ENCODE measurements at regions of chr6 and their contacts with region 1.

Region 1: DNA sequence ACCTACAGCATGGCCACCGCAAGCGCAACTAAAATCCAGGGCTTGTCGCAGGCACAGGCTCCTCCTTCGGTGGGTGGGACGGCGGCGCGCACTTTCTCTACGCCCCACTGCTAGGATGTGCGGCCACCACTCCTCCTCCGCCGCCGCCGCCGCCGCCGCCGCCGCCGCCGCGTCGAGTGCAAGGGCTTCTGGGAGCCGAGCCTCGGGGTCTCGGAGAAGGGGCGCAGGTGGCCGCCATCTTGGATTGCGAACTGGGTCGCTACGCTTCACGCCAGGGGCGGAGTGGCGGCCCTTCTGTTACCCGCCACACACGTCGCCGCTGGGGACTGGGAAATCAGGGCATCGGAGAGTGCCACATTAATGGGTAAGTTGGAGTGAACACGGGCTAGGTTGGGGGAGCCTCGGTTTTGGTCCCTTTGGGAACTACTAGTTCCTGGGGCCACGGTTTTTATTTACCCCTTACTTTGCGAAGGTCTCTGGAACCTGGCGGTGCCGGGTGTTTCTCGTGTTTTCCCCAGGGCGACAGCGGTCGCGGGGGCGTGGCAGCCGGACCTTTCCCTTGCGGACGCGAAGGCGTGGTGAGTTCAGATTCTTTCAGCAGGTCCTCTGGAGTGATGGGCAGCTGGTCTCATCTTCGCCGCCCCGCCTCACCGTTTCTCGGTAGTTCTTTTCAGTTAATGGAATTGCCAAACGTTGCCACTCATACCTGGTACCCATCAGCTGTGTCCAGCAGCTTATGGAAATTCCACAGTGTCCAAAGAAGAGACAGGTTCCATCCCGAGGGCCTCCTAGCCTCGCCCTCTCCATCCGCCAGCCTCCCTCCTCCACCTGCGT is at the start of gene KPNA5:
- DNase-seq: peak; percentile 95
- ATAC-seq: peak; percentile 93
- H3K4me3 ChIP-seq: peak within 1 kb of the TSS; percentile 69 to 89 (median 84)
- H3K4me3 Mint-ChIP-seq: peak within 1 kb of the TSS; percentile 99
- H3K27ac ChIP-seq: peak within 1 kb of the TSS; percentile 83 to 88
- H3K27ac Mint-ChIP-seq: peak within 1 kb of the TSS; percentile 99
- H3K4me1 ChIP-seq: peaks cover 9 to 20% of the 10 kb centered on the region in 2 donors
- H3K4me1 Mint-ChIP-seq: peaks cover 45% of the 10 kb centered on the region
- H3K27me3 ChIP-seq: no peaks in the 10 kb centered on the region
- H3K27me3 Mint-ChIP-seq: no peaks in the 10 kb centered on the region
- CTCF ChIP-seq: no peak
- total RNA-seq, gene KPNA5: 41.7 and 42.9 TPM in 2 replicates

Region 2: GRCh38 chr6:116010790-116011401 is 670.3 kb before region 1 on chr6:
- CTCF ChIA-PET with region 1: no interaction called
- POLR2A ChIA-PET with region 1: no interaction called
- intact Hi-C with region 1: no loop called
- DNase-seq: peak; percentile 69
- ATAC-seq: peak; percentile 57
- H3K4me3 ChIP-seq: no peak overlapping the region
- H3K4me3 Mint-ChIP-seq: no peak overlapping the region
- H3K27ac ChIP-seq: no peak overlapping the region
- H3K27ac Mint-ChIP-seq: no peak overlapping the region
- H3K4me1 ChIP-seq: peaks cover 3 to 10% of the 10 kb centered on the region in 2 donors
- H3K4me1 Mint-ChIP-seq: peaks cover 21% of the 10 kb centered on the region
- H3K27me3 ChIP-seq: no peaks in the 10 kb centered on the region
- H3K27me3 Mint-ChIP-seq: peaks cover 3% of the 10 kb centered on the region
- CTCF ChIP-seq: peak; percentile 88

Region 3: DNA sequence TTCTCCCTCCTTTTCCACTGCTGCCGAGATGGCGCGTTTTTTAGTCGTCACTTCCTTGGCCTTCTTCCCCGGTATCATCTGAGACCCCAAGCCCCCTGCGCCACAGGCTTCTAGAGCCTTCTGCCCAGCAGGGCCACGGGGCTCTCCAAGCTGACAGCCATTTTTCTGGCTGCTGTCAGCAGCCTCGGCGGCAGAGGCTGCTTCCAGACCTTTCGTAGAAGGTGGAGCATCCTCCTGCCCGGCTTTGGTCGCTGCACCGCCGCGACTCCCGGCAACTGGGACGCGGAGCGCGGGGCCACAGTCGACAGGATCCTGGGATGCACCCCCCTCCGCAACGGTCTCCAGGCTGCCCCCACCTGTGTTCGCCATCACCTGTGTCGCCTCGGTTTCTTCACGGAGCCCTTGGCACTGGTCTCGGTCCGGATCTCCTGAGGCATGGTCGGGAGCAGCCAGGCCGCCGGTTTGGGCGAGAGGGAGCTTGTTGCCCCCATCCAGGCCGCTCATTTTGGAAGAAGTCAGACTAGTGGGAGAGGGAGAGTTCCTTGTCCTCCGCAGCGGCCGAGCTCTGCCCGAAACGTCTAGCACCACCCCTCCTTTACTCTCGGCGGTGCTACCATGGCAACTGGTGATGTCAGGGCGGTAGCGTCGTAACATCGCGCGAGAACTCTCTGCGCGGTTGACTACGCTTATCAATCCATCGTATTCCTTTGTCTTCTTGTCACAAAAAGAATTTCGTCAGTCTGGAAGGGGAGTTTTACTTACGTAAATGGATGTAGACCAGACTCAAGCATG is 427.5 kb before region 1 on chr6 and contains the start of gene TSPYL4:
- CTCF ChIA-PET with region 1: no interaction called
- POLR2A ChIA-PET with region 1: no interaction called
- intact Hi-C with region 1: loop called (anchors 1 kb)
- DNase-seq: peak; percentile 95
- ATAC-seq: peak; percentile 99
- H3K4me3 ChIP-seq: peak within 1 kb of the TSS; percentile 85 to 99 (median 98)
- H3K4me3 Mint-ChIP-seq: no peak within 1 kb of the TSS
- H3K27ac ChIP-seq: peak within 1 kb of the TSS; percentile 94 to 98
- H3K27ac Mint-ChIP-seq: no peak within 1 kb of the TSS
- H3K4me1 ChIP-seq: peaks cover 31 to 36% of the 10 kb centered on the region in 2 donors
- H3K4me1 Mint-ChIP-seq: peaks cover 35% of the 10 kb centered on the region
- H3K27me3 ChIP-seq: no peaks in the 10 kb centered on the region
- H3K27me3 Mint-ChIP-seq: no peaks in the 10 kb centered on the region
- CTCF ChIP-seq: no peak
- total RNA-seq, gene TSPYL4: 20.5 and 20.6 TPM in 2 replicates

Region 4: GRCh38 chr6:116570856-116571682 is 110.1 kb before region 1 on chr6 and contains the start of gene RWDD1:
- CTCF ChIA-PET with region 1: no interaction called
- POLR2A ChIA-PET with region 1: no interaction called
- intact Hi-C with region 1: loop called (anchors 1 kb)
- DNase-seq: peak; percentile 99
- ATAC-seq: peak; percentile 93
- H3K4me3 ChIP-seq: peak within 1 kb of the TSS; percentile 81 to 93 (median 83)
- H3K4me3 Mint-ChIP-seq: peak within 1 kb of the TSS; percentile 97
- H3K27ac ChIP-seq: peak within 1 kb of the TSS; percentile 93 to 96
- H3K27ac Mint-ChIP-seq: peak within 1 kb of the TSS; percentile 97
- H3K4me1 ChIP-seq: peaks cover 24% of the 10 kb centered on the region in 2 donors
- H3K4me1 Mint-ChIP-seq: peaks cover 40% of the 10 kb centered on the region
- H3K27me3 ChIP-seq: no peaks in the 10 kb centered on the region
- H3K27me3 Mint-ChIP-seq: no peaks in the 10 kb centered on the region
- CTCF ChIP-seq: no peak
- total RNA-seq, gene RWDD1: 21.8 and 22.4 TPM in 2 replicates

Region 5: GRCh38 chr6:116615937-116616736 is 65.1 kb before region 1 on chr6 and contains the start of gene RSPH4A:
- CTCF ChIA-PET with region 1: no interaction called
- POLR2A ChIA-PET with region 1: no interaction called
- intact Hi-C with region 1: loop called (anchors 1 kb)
- DNase-seq: peak; percentile 80
- ATAC-seq: peak; percentile 92
- H3K4me3 ChIP-seq: peak within 1 kb of the TSS; percentile 37 to 70 (median 56)
- H3K4me3 Mint-ChIP-seq: peak within 1 kb of the TSS; percentile 84
- H3K27ac ChIP-seq: no peak within 1 kb of the TSS
- H3K27ac Mint-ChIP-seq: peak within 1 kb of the TSS; percentile 44
- H3K4me1 ChIP-seq: peaks cover 13 to 15% of the 10 kb centered on the region in 2 donors
- H3K4me1 Mint-ChIP-seq: peaks cover 13% of the 10 kb centered on the region
- H3K27me3 ChIP-seq: peaks cover 0 to 24% (median 5%) of the 10 kb centered on the region in 4 experiments
- H3K27me3 Mint-ChIP-seq: peaks cover 10% of the 10 kb centered on the region
- CTCF ChIP-seq: no peak
- total RNA-seq, gene RSPH4A: 0.69 and 0.83 TPM in 2 replicates

Region 6: GRCh38 chr6:116667623-116668022 is 13.6 kb before region 1 on chr6:
- CTCF ChIA-PET with region 1: interaction called, 8 read pairs
- POLR2A ChIA-PET with region 1: interaction called, 27 read pairs
- intact Hi-C with region 1: loop called (anchors 1 kb)
- DNase-seq: peak; percentile 76
- ATAC-seq: peak; percentile 52
- H3K4me3 ChIP-seq: peak overlapping the region; percentile 73 to 96 (median 91)
- H3K4me3 Mint-ChIP-seq: peak overlapping the region; percentile 100
- H3K27ac ChIP-seq: peak overlapping the region; percentile 88 to 92
- H3K27ac Mint-ChIP-seq: peak overlapping the region; percentile 61
- H3K4me1 ChIP-seq: peaks cover 15 to 26% of the 10 kb centered on the region in 2 donors
- H3K4me1 Mint-ChIP-seq: peaks cover 36% of the 10 kb centered on the region
- H3K27me3 ChIP-seq: no peaks in the 10 kb centered on the region
- H3K27me3 Mint-ChIP-seq: peaks cover 11% of the 10 kb centered on the region
- CTCF ChIP-seq: no peak

Region 7: GRCh38 chr6:116695401-116695800 is 14.2 kb after region 1 on chr6:
- CTCF ChIA-PET with region 1: interaction called, 3 read pairs
- POLR2A ChIA-PET with region 1: no interaction called
- intact Hi-C with region 1: loop called (anchors 1 kb)
- DNase-seq: peak; percentile 65
- ATAC-seq: peak; percentile 67
- H3K4me3 ChIP-seq: no peak overlapping the region
- H3K4me3 Mint-ChIP-seq: no peak overlapping the region
- H3K27ac ChIP-seq: peak overlapping the region in 1 of 2 donors; percentile 71
- H3K27ac Mint-ChIP-seq: no peak overlapping the region
- H3K4me1 ChIP-seq: peaks cover 0 to 10% of the 10 kb centered on the region in 2 donors
- H3K4me1 Mint-ChIP-seq: peaks cover 27% of the 10 kb centered on the region
- H3K27me3 ChIP-seq: no peaks in the 10 kb centered on the region
- H3K27me3 Mint-ChIP-seq: no peaks in the 10 kb centered on the region
- CTCF ChIP-seq: no peak